ENCODE measurements at regions of chr9 and their contacts with region 1.

Region 1: GRCh38 chr9:89602978-89603766 is 1.6 kb upstream of the GADD45G start:
- H3K4me3 ChIP-seq: peak overlapping the region; percentile 41
- H3K27ac ChIP-seq: peak overlapping the region; percentile 74; the same call in 1 of the 2 replicates
- H3K4me1 ChIP-seq: peaks cover 4% of the 10 kb centered on the region; the same call in 1 of the 2 replicates
- CTCF ChIP-seq: peak; percentile 53

Region 2: DNA sequence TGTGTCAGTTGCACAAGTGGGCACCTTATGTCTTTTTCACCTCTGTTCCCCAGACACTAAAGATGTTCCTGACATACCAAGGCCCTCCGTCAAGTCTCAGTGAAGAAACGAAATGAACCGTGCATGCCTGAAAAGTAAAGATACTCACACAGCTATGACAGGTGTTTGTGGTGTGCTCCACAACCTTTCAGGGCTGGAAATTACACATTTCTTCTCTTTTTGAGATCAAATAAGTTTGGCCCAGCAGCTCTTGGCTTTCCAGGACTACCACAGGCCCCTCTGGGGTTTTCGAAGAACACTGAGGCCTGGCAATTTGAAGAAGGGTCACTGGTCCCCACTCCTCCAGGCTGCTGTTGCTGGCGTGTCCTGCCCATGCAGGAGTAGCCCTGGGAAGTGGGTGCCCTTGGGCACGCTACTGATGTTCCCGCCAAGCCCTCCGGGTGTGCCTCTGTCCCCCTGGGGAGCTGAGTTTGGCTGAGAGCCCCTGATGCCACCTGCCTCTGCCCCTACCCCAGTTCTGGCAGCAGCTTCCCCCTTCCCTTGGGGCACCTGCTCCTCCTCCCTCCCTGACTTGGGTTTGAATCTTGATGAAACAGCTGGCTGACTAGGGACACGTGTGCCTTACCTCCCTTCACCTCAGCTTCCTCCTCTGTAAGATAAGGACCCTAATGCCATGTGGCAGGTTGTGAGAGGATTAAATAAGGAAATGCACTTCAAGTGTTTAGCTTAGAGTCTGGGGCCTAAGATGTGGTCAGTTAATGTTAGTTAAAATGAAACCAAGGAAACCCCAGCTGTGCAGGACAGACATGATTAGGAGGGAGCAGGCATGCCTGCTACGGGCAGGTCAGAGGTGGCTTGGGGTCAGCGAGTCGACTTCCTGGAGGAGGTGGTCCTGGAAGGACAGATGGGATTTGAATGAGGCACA is 47.5 kb before region 1 on chr9:
- CTCF ChIA-PET with region 1: no interaction called
- POLR2A ChIA-PET with region 1: no interaction called
- H3K4me3 ChIP-seq: no peak overlapping the region
- H3K27ac ChIP-seq: no peak overlapping the region
- H3K4me1 ChIP-seq: no peaks in the 10 kb centered on the region
- CTCF ChIP-seq: no peak

Region 3: GRCh38 chr9:89729895-89730530 is 126.8 kb after region 1 on chr9:
- CTCF ChIA-PET with region 1: interaction called, 7 read pairs
- POLR2A ChIA-PET with region 1: interaction called, 19 read pairs
- H3K4me3 ChIP-seq: no peak overlapping the region
- H3K27ac ChIP-seq: no peak overlapping the region
- H3K4me1 ChIP-seq: no peaks in the 10 kb centered on the region; the same call in 1 of the 2 replicates
- CTCF ChIP-seq: no peak

Region 4: GRCh38 chr9:89759572-89759971 is 156.4 kb after region 1 on chr9:
- CTCF ChIA-PET with region 1: interaction called, 9 read pairs
- POLR2A ChIA-PET with region 1: interaction called, 15 read pairs
- H3K4me3 ChIP-seq: no peak overlapping the region
- H3K27ac ChIP-seq: no peak overlapping the region
- H3K4me1 ChIP-seq: peaks cover 4% of the 10 kb centered on the region; the same call in 1 of the 2 replicates
- CTCF ChIP-seq: no peak

Region 5: DNA sequence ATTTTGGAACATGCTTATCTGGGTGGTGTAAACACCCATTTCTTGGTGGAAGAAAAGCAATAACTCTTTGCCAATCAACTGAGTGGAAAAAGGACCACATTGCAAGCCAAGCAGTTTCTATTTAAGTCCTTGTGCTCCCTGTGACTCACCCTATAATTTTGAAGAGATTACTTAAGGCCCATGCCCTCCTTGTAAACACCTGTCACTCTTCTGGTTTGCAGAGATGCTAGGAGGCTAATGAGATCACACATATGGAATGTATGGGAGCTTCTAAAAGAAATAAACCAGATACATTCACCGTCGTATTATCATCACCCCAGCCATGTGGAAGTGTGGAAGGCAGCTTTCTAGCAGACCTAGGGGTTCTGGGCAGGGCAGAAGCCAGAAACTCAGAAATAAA is 338.7 kb after region 1 on chr9:
- CTCF ChIA-PET with region 1: interaction called, 6 read pairs
- POLR2A ChIA-PET with region 1: interaction called, 22 read pairs
- H3K4me3 ChIP-seq: no peak overlapping the region
- H3K27ac ChIP-seq: peak overlapping the region; percentile 54; the same call in 1 of the 2 replicates
- H3K4me1 ChIP-seq: peaks cover 10% of the 10 kb centered on the region
- CTCF ChIP-seq: no peak

Region 6: DNA sequence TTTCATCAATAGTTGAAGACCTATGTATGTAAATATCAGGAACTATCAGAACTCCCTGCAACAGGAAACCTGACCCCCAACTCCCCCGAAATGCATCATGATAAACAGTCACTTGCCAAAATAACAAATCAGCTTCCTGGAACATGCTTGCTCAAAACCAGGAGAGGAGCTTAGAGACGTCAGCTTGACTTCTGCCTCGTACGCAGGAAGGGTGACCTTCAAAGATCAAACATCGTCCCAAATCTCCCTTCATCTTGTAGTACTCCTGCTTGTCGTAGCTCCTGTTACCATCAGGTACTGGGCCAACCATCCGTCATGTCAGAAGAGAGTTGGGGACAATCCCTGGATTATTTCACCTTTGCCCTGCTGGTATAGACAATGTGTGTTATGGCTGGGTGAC is 397.8 kb after region 1 on chr9:
- CTCF ChIA-PET with region 1: interaction called, 5 read pairs
- POLR2A ChIA-PET with region 1: interaction called, 12 read pairs
- H3K4me3 ChIP-seq: no peak overlapping the region
- H3K27ac ChIP-seq: no peak overlapping the region
- H3K4me1 ChIP-seq: peaks cover 6% of the 10 kb centered on the region; the same call in 1 of the 2 replicates
- CTCF ChIP-seq: no peak

Region 7: DNA sequence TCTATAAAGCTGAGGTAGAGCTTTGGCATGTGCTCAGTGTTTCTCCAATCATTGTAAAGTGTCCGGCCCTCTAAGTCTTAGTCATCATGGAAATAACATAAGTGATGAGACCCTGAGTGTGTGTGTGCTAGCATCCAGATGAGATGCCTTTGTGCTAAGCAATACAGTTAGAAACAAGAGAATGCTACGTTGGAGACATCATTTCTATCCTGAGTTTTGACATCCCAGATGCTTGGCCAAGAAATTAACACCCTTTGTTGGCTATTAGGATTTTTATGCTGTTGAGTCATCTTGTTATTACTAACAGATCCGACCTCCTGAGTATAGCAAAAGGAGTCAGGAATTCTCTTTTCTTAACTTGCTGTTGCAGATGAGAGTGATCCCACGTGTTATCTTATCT is 509.6 kb after region 1 on chr9:
- CTCF ChIA-PET with region 1: interaction called, 25 read pairs
- POLR2A ChIA-PET with region 1: no interaction called
- H3K4me3 ChIP-seq: no peak overlapping the region
- H3K27ac ChIP-seq: no peak overlapping the region
- H3K4me1 ChIP-seq: no peaks in the 10 kb centered on the region
- CTCF ChIP-seq: no peak